ENCODE measurements at regions of chr6 and their contacts with region 1.

Region 1: GRCh38 chr6:30914076-30914853 is at the start of gene VARS2:
- DNase-seq: peak; percentile 87
- H3K4me3 Mint-ChIP-seq: peak within 1 kb of the TSS; percentile 97
- H3K27ac Mint-ChIP-seq: peak within 1 kb of the TSS; percentile 88
- H3K4me1 Mint-ChIP-seq: peaks cover 16% of the 10 kb centered on the region
- H3K27me3 Mint-ChIP-seq: no peaks in the 10 kb centered on the region
- total RNA-seq, gene VARS2: 67.0 and 75.0 TPM in 2 replicates

Region 2: DNA sequence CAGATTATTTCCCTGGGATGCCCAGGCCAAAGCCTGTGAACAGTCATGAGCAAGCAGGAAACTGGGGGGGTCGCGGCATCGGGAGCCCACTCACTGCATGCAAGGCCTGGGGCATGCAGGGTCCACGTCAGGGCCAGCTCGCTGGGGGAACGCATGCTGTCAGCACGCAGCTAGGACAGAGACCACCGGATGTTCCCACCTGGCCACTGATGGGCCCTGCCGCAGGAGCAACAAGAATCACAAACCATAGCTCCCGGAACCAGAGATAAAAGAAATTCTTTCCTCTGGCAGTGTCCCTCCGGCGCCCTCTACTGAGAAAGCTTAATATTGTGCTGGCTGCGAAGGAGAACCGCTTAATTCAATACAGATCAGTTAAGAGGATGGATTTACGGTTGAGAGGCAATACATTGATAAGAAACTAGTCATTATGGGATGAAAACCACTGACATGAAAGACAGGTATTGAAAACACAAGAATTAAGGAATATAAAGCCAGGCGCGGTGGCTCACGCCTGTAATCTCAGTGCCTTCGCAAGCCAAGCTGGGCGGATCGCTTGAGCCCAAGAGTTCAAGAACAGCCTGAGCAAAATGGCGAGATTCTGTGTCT is 165.5 kb after region 1 on chr6:
- intact Hi-C with region 1: loop called (anchors 2 kb)
- DNase-seq: peak; percentile 54
- H3K4me3 Mint-ChIP-seq: no peak overlapping the region
- H3K27ac Mint-ChIP-seq: no peak overlapping the region
- H3K4me1 Mint-ChIP-seq: peaks cover 1% of the 10 kb centered on the region
- H3K27me3 Mint-ChIP-seq: peaks cover 7% of the 10 kb centered on the region

Region 3: DNA sequence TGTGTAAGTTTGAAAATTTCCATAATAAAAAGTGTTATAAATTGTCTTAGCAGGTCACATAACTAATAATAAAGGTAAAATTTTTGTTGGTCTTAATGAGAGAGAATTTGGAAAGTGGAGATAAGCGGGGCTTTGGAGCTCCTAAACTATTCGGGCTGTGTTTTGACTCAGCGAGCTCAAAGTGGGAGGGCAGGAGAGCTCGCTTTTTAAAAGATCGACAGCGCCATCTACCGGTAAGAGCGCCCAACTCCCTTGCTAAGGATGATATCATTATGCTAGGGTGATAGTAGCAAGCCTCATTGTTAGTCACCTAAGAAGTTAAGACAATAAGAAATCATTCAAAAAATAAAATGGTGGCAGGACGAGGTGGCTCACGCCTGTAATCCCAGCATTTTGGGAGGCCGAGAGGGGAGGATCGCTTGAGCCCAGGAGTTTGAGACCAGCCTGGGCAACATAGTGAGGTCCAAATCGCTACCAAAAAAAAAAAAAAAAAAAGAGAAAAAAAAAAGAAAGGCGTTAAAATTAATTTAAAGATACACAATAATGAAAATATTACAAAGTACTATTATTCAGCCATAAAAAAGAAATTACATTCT is 173.3 kb after region 1 on chr6:
- intact Hi-C with region 1: loop called (anchors 2 kb)
- DNase-seq: peak; percentile 78
- H3K4me3 Mint-ChIP-seq: no peak overlapping the region
- H3K27ac Mint-ChIP-seq: no peak overlapping the region
- H3K4me1 Mint-ChIP-seq: peaks cover 9% of the 10 kb centered on the region
- H3K27me3 Mint-ChIP-seq: peaks cover 17% of the 10 kb centered on the region

Measured in activated T-helper 2 cell treated with anti-CD3 and anti-CD28 coated beads, Interferon-gamma antibody, Interleukin-2, Interleukin-4, amounts not matched to agents 10 μg/mL and 5 μg/mL and 100 μg/mL, durations not matched to agents 14 hours and 24 hours and 36 hours (primary cell).